ENCODE measurements at regions of chr15 and their contacts with region 1.

Region 1: GRCh38 chr15:25611603-25612002 is 172.8 kb upstream of the UBE3A start:
- DNase-seq: no peak
- ATAC-seq: no peak
- H3K4me3 ChIP-seq: no peak overlapping the region
- H3K27ac ChIP-seq: no peak overlapping the region
- H3K4me1 ChIP-seq: no peaks in the 10 kb centered on the region
- H3K27me3 ChIP-seq: no peaks in the 10 kb centered on the region; a peak in 1 of 5 replicates
- CTCF ChIP-seq: no peak
- EP300 ChIP-seq: no peak
- POLR2A ChIP-seq: no peak
- RAD21 ChIP-seq: no peak

Region 2: DNA sequence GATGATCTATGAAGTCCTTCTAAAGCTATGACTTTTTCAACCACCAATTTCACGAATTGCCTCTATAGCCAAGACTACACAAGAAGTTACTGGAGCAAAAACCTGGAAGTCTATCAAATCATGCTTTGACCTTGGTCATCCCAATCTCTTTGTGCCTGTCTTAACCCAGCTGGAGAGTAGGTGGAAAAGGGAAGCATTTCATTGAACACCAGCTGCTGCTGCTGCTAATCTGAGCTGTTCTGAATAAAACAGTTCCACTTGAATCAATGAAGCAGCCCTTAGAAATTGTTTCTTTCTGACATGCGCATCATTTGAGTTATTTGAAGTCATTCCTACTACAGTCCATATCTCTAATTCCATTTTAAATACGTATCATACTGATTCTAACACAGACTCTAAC is 165.5 kb before region 1 on chr15:
- CTCF ChIA-PET with region 1: no interaction called
- POLR2A ChIA-PET with region 1: no interaction called
- in situ Hi-C with region 1: no loop called
- intact Hi-C with region 1: no loop called
- DNase-seq: no peak
- ATAC-seq: no peak
- H3K4me3 ChIP-seq: no peak overlapping the region
- H3K27ac ChIP-seq: no peak overlapping the region
- H3K4me1 ChIP-seq: no peaks in the 10 kb centered on the region
- H3K27me3 ChIP-seq: no peaks in the 10 kb centered on the region
- CTCF ChIP-seq: no peak
- EP300 ChIP-seq: no peak
- POLR2A ChIP-seq: no peak
- RAD21 ChIP-seq: no peak

Region 3: GRCh38 chr15:25670025-25670554 is 58.5 kb after region 1 on chr15:
- CTCF ChIA-PET with region 1: no interaction called
- POLR2A ChIA-PET with region 1: no interaction called
- in situ Hi-C with region 1: loop called (anchors 10 kb)
- intact Hi-C with region 1: no loop called
- DNase-seq: no peak
- ATAC-seq: no peak
- H3K4me3 ChIP-seq: no peak overlapping the region
- H3K27ac ChIP-seq: no peak overlapping the region
- H3K4me1 ChIP-seq: no peaks in the 10 kb centered on the region
- H3K27me3 ChIP-seq: no peaks in the 10 kb centered on the region
- CTCF ChIP-seq: no peak
- EP300 ChIP-seq: no peak
- POLR2A ChIP-seq: no peak
- RAD21 ChIP-seq: no peak

Region 4: GRCh38 chr15:25727867-25728600 is 116.4 kb after region 1 on chr15:
- CTCF ChIA-PET with region 1: no interaction called
- POLR2A ChIA-PET with region 1: no interaction called
- in situ Hi-C with region 1: no loop called
- intact Hi-C with region 1: no loop called
- DNase-seq: no peak
- ATAC-seq: no peak
- H3K4me3 ChIP-seq: no peak overlapping the region
- H3K27ac ChIP-seq: no peak overlapping the region
- H3K4me1 ChIP-seq: no peaks in the 10 kb centered on the region
- H3K27me3 ChIP-seq: no peaks in the 10 kb centered on the region
- CTCF ChIP-seq: no peak
- EP300 ChIP-seq: no peak
- POLR2A ChIP-seq: no peak
- RAD21 ChIP-seq: no peak

Measured in HepG2 (cell line).